A673 (cell line): ENCODE measurements at regions of chr2 and their contacts with region 1.

Region 1: DNA sequence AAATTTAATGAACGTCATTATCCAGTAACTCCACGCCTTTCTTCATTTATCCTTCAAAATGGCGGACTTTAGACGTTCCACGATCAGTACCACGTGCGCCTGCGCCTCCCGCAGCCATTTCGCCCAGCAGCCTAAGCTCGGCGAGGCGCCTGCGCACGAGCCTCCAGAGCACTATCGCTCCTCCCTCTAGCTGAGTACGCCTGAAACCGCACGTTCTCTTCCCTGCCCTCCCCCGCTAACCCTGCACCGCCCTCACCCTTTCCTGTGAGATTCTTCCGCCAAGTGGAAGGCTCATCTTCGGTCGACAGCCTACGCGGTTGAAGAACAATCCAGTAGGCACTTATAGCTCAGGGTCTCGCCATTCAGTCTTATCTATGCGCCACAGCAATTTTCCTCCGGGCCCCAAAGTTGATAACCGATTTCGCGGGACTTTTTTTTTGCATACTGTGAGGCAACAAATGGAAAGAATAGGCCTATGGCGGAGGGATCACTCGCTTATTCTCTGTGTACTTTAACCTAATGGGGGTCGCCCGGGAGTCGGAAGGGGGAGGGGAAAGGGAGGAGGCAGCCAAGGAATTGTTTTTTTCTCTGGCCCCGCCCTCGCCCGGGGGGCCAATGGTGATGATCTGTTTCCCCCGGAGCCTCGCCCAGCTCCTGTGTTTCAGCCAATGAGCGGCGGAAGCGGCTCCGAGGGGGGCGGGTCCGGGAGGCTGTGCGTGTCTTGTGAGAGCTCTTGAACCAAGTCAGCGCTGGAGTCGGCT is at the start of gene KDM3A:
- DNase-seq: peak; percentile 100
- H3K4me3 ChIP-seq: peak within 1 kb of the TSS; percentile 61
- H3K27ac ChIP-seq: peak within 1 kb of the TSS; percentile 99
- H3K4me1 ChIP-seq: peaks cover 18% of the 10 kb centered on the region
- H3K27me3 ChIP-seq: no peaks in the 10 kb centered on the region
- CTCF ChIP-seq: no peak
- total RNA-seq, gene KDM3A: 40.7 and 43.8 TPM in 2 replicates

Region 2: DNA sequence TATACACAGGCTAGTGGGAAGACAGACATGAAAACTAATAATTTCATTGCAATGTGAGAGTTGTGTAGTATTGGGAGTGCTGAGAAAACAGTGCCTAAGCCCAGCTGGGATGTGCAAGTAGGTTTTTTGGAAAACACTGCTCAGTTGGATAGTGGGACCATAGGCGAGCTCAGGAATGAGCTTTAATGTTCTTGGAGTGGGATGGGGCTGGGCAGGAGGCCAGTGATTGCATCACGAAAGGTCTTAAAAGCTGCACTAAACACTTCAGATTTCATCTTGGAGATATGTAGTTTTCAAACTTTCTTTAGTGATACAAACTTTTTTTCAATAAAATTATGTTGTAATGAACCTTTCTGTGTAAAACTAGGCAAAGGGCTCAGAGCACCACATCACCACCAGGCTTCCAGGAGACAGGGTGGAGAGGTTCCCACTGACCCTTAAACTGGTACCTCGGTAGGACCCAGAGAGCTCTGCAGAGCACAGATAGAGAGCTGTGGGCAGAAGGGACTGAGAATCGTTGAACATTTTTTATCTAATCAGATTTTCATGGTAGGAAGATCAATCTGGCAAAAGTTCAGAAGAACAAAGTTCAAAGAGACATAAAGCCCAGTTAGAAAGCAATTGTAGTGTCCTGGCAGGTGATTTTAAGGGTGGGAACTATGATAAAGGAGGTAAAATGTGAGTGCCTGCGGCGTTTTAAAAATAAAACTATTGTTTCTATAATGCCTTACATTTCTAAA is 1736.1 kb before region 1 on chr2:
- CTCF ChIA-PET with region 1: no interaction called
- POLR2A ChIA-PET with region 1: no interaction called
- intact Hi-C with region 1: no loop called
- DNase-seq: no peak
- H3K4me3 ChIP-seq: no peak overlapping the region
- H3K27ac ChIP-seq: no peak overlapping the region
- H3K4me1 ChIP-seq: no peaks in the 10 kb centered on the region
- H3K27me3 ChIP-seq: no peaks in the 10 kb centered on the region
- CTCF ChIP-seq: no peak

Region 3: GRCh38 chr2:86195055-86195807 is 245.6 kb before region 1 on chr2 and contains the start of gene IMMT:
- CTCF ChIA-PET with region 1: no interaction called
- POLR2A ChIA-PET with region 1: no interaction called
- intact Hi-C with region 1: loop called (anchors 1 kb)
- DNase-seq: peak; percentile 98
- H3K4me3 ChIP-seq: peak within 1 kb of the TSS; percentile 78
- H3K27ac ChIP-seq: peak within 1 kb of the TSS; percentile 99
- H3K4me1 ChIP-seq: peaks cover 10% of the 10 kb centered on the region
- H3K27me3 ChIP-seq: no peaks in the 10 kb centered on the region
- CTCF ChIP-seq: no peak
- total RNA-seq, gene IMMT: 172 and 174 TPM in 2 replicates

Region 4: DNA sequence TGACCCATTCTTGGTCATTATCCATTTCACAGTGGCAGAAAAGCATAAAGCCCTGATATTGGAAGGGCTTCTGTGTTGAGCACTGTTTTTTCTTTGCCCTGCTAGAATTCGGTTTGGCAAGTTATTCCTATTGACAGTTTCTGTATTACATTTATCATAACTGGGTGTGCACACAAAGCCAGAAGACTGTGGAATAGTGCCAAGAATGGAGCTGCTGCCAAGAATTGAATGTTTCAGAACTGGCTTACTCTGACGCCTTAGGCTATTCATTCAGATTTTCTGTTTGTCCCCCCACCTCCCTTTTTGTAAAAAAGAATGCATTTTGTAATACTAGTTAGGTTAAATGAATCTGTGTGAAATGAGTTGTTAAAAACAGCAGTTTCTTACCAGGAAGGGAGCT is 13.0 kb after region 1 on chr2:
- CTCF ChIA-PET with region 1: interaction called, 17 read pairs
- POLR2A ChIA-PET with region 1: interaction called, 6 read pairs
- intact Hi-C with region 1: no loop called
- DNase-seq: peak; percentile 34
- H3K4me3 ChIP-seq: no peak overlapping the region
- H3K27ac ChIP-seq: no peak overlapping the region
- H3K4me1 ChIP-seq: peaks cover 8% of the 10 kb centered on the region
- H3K27me3 ChIP-seq: no peaks in the 10 kb centered on the region
- CTCF ChIP-seq: no peak

Region 5: DNA sequence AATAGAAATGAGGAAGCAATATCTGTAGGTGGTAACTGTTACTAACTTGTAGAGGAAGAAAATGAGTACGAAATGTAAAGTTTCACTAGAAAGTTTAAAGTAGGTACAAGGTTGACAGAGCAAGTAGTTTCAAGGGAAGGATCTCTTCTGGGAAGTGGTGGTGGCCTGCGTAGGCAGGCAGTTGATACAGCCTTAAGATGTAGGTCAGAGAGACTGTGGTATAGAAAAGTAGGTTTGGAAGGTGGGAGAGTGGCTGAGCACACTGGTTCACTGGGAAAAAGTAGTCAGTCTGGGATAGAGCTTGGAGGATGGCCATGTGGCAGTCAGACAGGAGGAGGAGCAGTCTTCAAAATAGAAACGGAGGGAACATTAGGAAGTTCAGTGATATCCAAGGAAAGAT is 23.8 kb after region 1 on chr2:
- CTCF ChIA-PET with region 1: no interaction called
- POLR2A ChIA-PET with region 1: interaction called, 11 read pairs
- intact Hi-C with region 1: no loop called
- DNase-seq: no peak
- H3K4me3 ChIP-seq: no peak overlapping the region
- H3K27ac ChIP-seq: no peak overlapping the region
- H3K4me1 ChIP-seq: no peaks in the 10 kb centered on the region
- H3K27me3 ChIP-seq: no peaks in the 10 kb centered on the region
- CTCF ChIP-seq: no peak

Region 6: DNA sequence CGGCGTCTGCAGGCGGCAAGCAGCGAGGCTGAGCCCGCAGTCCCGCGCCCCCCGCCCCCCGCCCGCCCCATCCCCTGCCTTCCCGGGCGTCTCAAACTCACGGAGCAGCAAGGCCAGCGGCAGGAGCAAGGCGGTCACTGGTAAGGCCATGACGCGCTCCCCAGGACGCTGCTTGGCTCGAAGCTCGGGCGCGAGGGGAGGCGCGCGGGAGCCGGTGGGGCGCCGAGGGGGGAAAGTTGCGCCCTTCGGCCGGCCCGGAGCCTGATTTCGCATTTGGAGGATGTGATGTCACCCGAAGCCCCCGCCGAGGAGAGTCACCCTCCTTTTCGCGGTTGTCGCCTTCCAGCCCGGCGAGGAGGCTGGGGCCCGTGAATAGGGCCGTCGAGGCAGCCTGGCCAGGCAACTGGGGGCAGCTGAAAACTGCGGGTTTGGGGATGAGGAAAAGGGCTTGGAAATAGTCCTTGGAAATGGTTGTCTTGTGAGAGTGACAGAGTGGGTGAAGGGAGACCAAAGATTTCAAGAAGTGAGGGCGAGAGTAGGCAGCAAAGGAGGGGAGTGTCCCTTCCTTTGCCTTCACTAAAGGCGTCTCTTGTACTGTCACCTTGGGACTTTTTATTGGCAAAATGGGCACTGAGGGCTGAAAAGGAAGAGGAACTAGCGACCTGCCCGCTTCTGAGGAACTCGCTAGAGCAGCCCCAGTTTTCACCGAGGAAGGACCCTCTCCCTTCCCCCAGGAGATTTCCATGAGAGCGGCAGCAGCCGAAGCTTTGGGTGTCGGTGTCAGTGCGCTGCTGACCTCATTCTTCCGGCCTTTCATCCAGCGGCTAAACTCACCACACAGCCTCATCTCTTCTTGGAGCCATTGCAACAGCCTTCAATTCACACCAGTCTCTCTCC is 350.1 kb after region 1 on chr2 and contains the start of gene CD8A:
- CTCF ChIA-PET with region 1: no interaction called
- POLR2A ChIA-PET with region 1: interaction called, 11 read pairs
- intact Hi-C with region 1: no loop called
- DNase-seq: no peak
- H3K4me3 ChIP-seq: no peak within 1 kb of the TSS
- H3K27ac ChIP-seq: no peak within 1 kb of the TSS
- H3K4me1 ChIP-seq: peaks cover 12% of the 10 kb centered on the region
- H3K27me3 ChIP-seq: peaks cover 80% of the 10 kb centered on the region
- CTCF ChIP-seq: no peak
- total RNA-seq, gene CD8A: not detected in 2 replicates